ENCODE measurements at regions of chr12 and their contacts with region 1.

Region 1: GRCh38 chr12:48851883-48852733 is at the start of gene DDX23:
- DNase-seq: peak; percentile 96
- H3K4me3 Mint-ChIP-seq: peak within 1 kb of the TSS; percentile 97
- H3K27ac Mint-ChIP-seq: peak within 1 kb of the TSS; percentile 97
- H3K4me1 Mint-ChIP-seq: peaks cover 31% of the 10 kb centered on the region
- H3K27me3 Mint-ChIP-seq: no peaks in the 10 kb centered on the region
- total RNA-seq, gene DDX23: 119 to 121 TPM

Region 2: DNA sequence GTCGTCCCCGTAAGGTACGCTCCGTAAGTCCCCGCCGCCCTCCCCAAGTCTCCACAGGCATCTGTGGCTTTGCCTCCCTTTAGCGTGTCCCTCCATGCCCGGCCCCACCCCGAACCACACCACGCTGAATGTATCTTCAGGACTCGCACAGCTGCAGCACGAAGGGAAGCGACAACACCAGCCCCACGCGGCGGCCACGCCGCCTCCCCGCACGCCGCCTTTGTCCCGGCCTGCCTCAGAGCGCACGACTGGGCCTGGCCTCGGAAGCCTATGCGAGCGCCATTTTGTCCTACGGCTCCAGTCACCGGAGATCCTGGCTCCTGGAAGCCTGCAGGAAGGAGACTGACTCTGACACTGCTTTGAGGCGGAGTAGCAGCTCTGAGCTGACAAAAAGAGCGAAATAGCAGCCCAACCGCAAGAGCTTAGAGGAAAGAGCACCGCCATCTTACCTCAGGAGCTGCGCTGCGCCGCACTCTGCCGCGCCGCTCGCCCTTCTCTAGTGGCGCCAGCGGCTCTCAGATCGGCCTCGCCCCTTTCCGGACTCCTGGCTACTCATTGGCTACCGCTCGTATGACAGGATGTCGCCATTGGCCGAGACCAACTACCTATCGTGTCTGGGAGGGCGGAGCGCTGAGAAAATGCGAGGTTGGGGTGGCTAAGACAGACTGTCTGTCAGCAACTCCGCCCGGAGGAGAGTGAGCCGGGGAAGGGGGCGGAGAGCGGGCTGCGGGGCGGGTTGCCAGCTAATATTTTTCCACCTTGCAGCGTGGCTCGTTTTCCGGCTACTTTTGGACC is 170.2 kb before region 1 on chr12 and contains the start of gene KANSL2:
- CTCF ChIA-PET with region 1: no interaction called
- POLR2A ChIA-PET with region 1: interaction called, 3 read pairs
- intact Hi-C with region 1: loop called (anchors 5 kb)
- DNase-seq: peak; percentile 99
- H3K4me3 Mint-ChIP-seq: peak within 1 kb of the TSS; percentile 99
- H3K27ac Mint-ChIP-seq: peak within 1 kb of the TSS; percentile 94
- H3K4me1 Mint-ChIP-seq: peaks cover 41% of the 10 kb centered on the region
- H3K27me3 Mint-ChIP-seq: no peaks in the 10 kb centered on the region
- total RNA-seq, gene KANSL2: 45.7 to 48.4 TPM

Region 3: DNA sequence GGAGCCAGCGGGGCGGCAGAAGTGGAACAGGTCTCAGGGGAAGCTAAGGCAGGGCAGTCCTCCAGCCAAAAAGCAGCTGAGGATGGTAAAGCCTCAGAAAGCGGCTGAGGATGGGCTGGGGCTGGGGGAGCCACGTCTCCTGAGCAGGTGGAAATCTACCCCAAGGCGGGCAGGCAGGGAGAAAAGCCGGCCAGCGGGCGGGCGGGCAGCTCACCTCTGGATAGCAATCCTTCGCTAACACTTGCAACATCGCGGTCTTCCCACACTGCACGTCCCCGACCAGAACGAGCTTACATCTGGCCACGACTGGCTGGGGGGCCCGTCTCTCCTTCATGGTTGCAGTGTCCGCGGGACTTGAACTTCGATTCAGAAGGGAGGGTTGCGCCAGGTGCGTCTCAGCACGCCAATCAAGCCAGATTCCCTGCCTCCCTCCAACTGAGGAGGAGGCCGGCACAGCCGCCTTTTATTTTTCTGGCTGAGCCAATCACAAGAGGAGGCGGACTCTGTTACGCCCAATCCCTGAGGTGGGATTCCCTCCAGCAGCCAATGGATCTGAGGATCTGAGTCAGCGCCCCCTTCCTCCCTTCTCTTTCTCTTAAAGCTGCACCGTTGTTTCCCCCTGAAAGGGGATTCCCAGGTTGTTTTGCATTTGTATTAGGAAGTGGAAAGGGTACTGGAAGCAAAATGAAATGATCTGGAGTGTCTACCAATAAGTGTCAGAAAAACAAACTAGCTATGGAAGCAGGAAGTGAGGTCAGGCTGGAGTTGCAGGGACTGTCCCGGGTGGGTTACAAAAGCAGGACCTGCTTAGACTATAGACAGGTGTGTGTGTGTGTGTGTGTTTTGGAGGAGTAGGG is 13.6 kb after region 1 on chr12 and contains the start of gene RND1:
- CTCF ChIA-PET with region 1: interaction called, 106 read pairs
- POLR2A ChIA-PET with region 1: interaction called, 27 read pairs
- intact Hi-C with region 1: loop called (anchors 1 kb)
- DNase-seq: peak; percentile 91
- H3K4me3 Mint-ChIP-seq: peak within 1 kb of the TSS; percentile 85
- H3K27ac Mint-ChIP-seq: peak within 1 kb of the TSS; percentile 74
- H3K4me1 Mint-ChIP-seq: peaks cover 20% of the 10 kb centered on the region
- H3K27me3 Mint-ChIP-seq: peaks cover 14% of the 10 kb centered on the region
- total RNA-seq, gene RND1: 2.4 to 3.5 TPM

Region 4: DNA sequence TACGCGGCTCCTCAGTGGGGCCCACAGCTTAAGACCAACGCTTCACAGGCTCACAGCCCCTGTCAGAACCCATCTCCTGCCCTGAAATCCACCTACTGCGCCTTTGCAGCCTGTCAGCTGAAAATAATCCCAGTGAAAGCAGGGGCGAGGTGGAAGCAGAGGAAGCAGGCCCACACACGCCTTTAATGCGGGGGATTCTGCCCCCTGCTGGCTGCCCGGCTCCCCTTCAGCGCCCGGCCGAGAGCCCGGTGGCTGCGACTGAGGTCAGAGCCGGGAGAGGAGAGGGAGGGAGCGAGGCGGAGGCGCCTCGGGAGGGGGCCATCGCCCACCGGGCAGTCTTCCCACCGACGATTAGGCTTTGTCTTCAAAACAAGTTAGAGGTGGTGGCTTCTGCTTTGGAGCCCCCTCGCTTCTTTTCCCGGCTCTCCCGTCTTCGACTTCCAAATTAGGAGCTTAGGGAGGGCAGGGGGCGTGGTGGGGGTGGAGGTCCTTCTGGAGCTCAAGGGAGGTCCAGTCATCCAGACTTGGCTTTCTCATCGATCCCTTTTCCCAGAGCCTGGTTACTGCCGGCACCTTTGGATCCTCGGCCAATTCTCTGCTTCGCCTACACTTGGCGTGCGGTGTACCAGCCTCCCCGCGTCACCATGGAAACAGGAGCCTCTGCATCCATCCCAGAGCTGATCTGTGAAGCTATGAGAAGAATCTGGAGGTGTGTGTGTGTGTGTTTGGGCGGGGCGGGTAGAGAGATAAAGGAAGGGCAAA is 38.7 kb after region 1 on chr12:
- CTCF ChIA-PET with region 1: interaction called, 204 read pairs
- POLR2A ChIA-PET with region 1: interaction called, 18 read pairs
- intact Hi-C with region 1: loop called (anchors 1 kb)
- DNase-seq: peak; percentile 87
- H3K4me3 Mint-ChIP-seq: peak overlapping the region; percentile 32
- H3K27ac Mint-ChIP-seq: no peak overlapping the region
- H3K4me1 Mint-ChIP-seq: peaks cover 7% of the 10 kb centered on the region
- H3K27me3 Mint-ChIP-seq: peaks cover 12% of the 10 kb centered on the region

Region 5: DNA sequence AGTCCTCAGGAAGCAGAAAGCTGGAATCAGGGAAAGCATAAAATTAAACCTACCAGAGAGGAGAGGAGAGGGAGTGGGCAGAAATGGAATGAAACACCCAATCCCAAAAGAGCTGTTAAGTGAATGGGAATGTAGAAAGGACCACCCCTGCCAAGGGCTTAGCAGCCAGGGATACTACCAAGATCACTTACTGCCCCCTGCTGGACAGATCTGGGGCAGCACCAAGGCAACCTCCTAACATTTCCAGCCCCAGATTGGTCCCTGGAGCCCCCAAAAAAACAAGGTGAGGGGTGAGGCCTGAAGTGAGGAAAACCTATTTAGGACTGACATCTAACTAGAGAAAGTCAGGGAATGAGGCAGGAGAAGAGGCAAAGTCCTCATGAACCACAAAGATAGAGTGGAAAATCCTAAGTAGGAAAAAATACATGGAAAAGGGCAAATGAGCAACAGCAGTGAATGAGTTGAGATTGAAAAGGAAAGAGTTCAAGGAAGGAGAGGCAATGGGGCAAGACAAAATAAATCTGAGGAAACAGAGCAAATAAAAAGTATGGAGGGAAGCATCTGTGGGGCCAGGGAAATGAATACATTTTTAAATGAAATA is 84.4 kb after region 1 on chr12:
- CTCF ChIA-PET with region 1: interaction called, 118 read pairs
- POLR2A ChIA-PET with region 1: interaction called, 3 read pairs
- intact Hi-C with region 1: loop called (anchors 1 kb)
- DNase-seq: peak; percentile 85
- H3K4me3 Mint-ChIP-seq: no peak overlapping the region
- H3K27ac Mint-ChIP-seq: no peak overlapping the region
- H3K4me1 Mint-ChIP-seq: peaks cover 22% of the 10 kb centered on the region
- H3K27me3 Mint-ChIP-seq: no peaks in the 10 kb centered on the region

Region 6: GRCh38 chr12:48995061-48995879 is 143.2 kb after region 1 on chr12:
- CTCF ChIA-PET with region 1: interaction called, 21 read pairs
- POLR2A ChIA-PET with region 1: no interaction called
- intact Hi-C with region 1: no loop called
- DNase-seq: peak; percentile 72
- H3K4me3 Mint-ChIP-seq: no peak overlapping the region
- H3K27ac Mint-ChIP-seq: no peak overlapping the region
- H3K4me1 Mint-ChIP-seq: peaks cover 32% of the 10 kb centered on the region
- H3K27me3 Mint-ChIP-seq: peaks cover 37% of the 10 kb centered on the region

Region 7: DNA sequence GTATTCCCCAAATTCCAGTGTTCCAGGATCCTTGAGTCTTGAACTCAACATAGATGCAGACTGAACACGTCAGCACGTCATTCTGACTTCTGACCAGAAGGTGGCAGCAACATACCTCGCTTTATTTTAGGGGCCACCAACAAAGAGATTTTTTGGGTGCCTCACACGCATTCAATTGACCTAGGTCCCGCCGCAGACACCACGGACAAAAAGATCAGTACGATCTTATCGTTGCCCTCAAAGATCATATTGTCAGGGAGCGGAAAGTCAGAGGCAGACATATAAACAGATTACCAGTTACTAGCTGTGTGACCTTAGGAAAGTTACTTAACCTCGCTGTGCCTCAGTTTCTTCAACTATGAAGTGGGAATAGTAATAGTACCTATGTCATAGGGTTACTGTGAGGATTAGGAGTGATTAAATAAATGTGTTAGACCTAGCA is 436.3 kb after region 1 on chr12:
- CTCF ChIA-PET with region 1: no interaction called
- POLR2A ChIA-PET with region 1: no interaction called
- intact Hi-C with region 1: no loop called
- DNase-seq: peak; percentile 80
- H3K4me3 Mint-ChIP-seq: no peak overlapping the region
- H3K27ac Mint-ChIP-seq: no peak overlapping the region
- H3K4me1 Mint-ChIP-seq: no peaks in the 10 kb centered on the region
- H3K27me3 Mint-ChIP-seq: peaks cover 23% of the 10 kb centered on the region